Dorsolateral prefrontal cortex (tissue), 120 donors: ENCODE measurements at regions of chr1 and their contacts with region 1.

Region 1: DNA sequence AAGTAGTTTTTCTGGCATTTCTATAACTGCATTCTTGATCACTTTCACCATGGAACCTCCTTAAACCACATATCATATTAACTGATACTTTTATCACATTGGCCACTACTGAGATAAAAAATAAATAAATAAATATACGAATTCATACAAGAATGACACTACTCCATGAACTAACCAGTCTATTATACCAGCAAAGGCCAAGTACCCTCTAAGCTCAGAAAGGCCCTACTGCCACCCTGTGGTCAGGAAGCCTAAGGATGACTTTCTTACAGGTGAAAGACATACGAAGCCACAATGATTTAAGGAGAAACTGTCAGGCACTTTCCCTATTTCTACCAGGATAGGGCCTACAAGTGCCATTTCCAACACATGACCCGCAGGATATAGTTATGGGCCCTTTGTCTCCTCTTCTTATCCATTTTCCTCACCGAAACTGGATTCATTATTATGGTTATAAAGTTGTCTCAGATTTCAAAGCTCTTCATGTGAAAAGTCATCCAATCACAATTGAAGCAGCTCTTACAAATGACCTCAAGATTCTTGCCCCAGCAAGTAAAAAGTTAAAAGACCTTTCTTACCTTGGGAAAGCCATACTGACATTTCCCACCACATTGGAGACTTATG is 23.9 kb downstream of the DNAJC8 start:
- DNase-seq: peak in 8 of 10 donors; percentile 26 to 84 (median 67)
- H3K4me3 ChIP-seq: no peak overlapping the region
- H3K27ac ChIP-seq: peak overlapping the region in 12 of 59 donors; percentile 6 to 57 (median 38)
- H3K27me3 ChIP-seq: no peaks in the 10 kb centered on the region
- CTCF ChIP-seq: peak in 55 of 56 donors; percentile 57 to 95 (median 75)

Region 2: DNA sequence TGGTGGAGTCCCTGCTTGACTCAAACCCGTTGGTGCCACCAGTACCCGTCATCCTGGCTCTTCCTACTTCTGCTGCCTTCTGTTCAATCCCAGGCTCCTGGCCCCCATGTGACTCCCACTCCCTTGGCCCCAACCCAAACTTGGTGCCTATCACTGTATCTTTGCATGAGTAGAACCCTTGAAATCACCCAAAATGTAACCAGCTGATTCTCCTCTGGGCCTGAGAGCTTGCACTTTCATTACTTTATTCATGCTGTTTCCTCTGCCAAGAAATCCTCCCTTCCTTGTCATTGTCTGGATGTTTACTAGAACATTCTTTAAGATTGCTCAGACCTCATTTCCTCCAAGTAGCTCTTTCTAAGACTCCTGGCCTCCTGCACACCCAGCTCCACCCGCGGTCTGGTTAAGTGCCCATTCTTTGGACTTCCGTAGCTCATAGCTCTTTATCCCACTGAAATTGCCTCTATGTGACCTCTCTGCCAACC is 48.1 kb before region 1 on chr1:
- intact Hi-C with region 1: loop called in 1 of 2 experiments (anchors 5 kb)
- DNase-seq: no peak
- H3K4me3 ChIP-seq: no peak overlapping the region
- H3K27ac ChIP-seq: peak overlapping the region in 31 of 59 donors; percentile 0 to 91 (median 37)
- H3K27me3 ChIP-seq: no peaks in the 10 kb centered on the region
- CTCF ChIP-seq: no peak